ENCODE measurements at regions of chr9 and their contacts with region 1.

Region 1: DNA sequence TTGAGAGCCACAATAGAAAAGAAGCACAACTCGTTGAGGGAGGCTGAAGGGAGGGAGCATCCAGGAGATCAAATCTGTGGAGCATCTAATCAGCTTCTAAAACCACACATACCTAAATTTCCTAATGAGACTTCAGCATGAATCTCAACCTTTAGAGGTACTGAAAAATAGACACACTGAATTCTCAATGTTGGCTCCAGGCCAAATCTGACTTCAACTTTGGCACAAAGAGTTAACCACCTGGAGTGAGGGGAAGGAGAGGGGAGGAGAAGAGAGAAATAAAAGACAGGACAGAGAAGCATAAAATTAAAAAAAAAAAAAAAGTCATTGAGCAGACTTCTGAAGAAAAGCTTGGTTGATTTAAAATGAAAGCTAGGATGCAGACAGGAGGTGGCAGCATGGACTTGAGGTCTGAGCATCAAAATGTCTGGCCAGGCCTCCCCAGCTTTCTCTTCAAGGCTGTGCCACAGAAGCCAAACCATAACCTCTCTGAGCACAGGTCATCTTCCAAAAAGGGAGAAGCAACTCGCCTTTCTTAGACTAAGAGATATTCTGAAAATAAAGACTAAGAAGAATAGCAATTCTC is 205.6 kb downstream of the DENND1A start:
- DNase-seq: no peak
- H3K4me3 ChIP-seq: no peak overlapping the region
- H3K27ac ChIP-seq: no peak overlapping the region
- H3K4me1 ChIP-seq: no peaks in the 10 kb centered on the region
- H3K27me3 ChIP-seq: no peaks in the 10 kb centered on the region
- CTCF ChIP-seq: peak in 3 of 5 experiments; percentile 8 to 23 (median 14)
- EP300 ChIP-seq: no peak
- POLR2A ChIP-seq: no peak

Region 2: DNA sequence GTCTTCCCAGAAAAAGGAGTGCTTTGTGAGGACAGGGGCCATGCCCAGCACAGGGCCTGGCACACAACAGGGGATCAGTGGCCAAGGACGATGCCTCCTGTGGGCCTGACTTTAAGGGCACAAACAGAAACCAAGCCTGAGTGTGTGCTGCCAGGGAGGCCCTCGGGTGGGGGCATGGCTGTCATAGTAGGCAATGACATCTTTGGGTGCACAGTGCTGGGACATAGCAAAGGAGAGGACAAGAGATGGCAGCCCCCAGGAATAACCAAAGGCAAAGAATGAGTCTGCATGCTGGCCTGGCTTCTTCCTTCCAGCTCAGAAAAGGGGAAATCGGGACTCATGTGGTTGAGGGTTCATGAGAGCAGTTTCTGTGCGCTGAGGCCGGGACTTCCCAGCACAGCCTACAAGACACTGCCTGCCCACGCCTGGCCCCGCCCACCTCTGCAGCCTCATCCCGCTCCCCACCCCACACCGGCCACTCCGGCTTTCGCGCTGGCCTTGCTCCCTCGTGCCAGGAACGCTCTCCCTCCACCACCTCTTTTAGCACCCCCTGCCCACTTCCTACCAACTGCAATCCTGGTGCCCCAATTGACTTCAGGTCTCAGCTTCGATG is 273.5 kb after region 1 on chr9:
- in situ Hi-C with region 1: no loop called
- intact Hi-C with region 1: loop called (anchors 5 kb)
- DNase-seq: peak; percentile 56
- H3K4me3 ChIP-seq: no peak overlapping the region
- H3K27ac ChIP-seq: no peak overlapping the region
- H3K4me1 ChIP-seq: peaks cover 0 to 29% (median 16%) of the 10 kb centered on the region in 4 donors
- H3K27me3 ChIP-seq: peaks cover 90% of the 10 kb centered on the region
- CTCF ChIP-seq: no peak
- EP300 ChIP-seq: no peak
- POLR2A ChIP-seq: no peak